ENCODE measurements at regions of chr7 and their contacts with region 1.

Region 1: GRCh38 chr7:26090927-26091519 is 61.0 kb upstream of the NFE2L3 start:
- DNase-seq: peak in 4 of 5 donors; percentile 40 to 45 (median 44)
- H3K4me3 ChIP-seq: no peak overlapping the region
- H3K4me3 Mint-ChIP-seq: peak overlapping the region in 2 of 8 donors; percentile 5 to 20
- H3K27ac ChIP-seq: no peak overlapping the region
- H3K27ac Mint-ChIP-seq: peak overlapping the region in 2 of 7 donors; percentile 0
- H3K4me1 ChIP-seq: no peaks in the 10 kb centered on the region
- H3K4me1 Mint-ChIP-seq: peaks cover 4 to 18% (median 12%) of the 10 kb centered on the region in 4 donors
- H3K27me3 ChIP-seq: no peaks in the 10 kb centered on the region
- H3K27me3 Mint-ChIP-seq: no peaks in the 10 kb centered on the region

Region 2: GRCh38 chr7:26101361-26102151 is 10.5 kb after region 1 on chr7:
- CTCF ChIA-PET with region 1: interaction called, 19 read pairs
- POLR2A ChIA-PET with region 1: no interaction called
- intact Hi-C with region 1: no loop called
- DNase-seq: no peak
- H3K4me3 ChIP-seq: no peak overlapping the region
- H3K4me3 Mint-ChIP-seq: peak overlapping the region in 7 of 8 donors; percentile 16 to 67 (median 46)
- H3K27ac ChIP-seq: no peak overlapping the region
- H3K27ac Mint-ChIP-seq: peak overlapping the region in 3 of 7 donors; percentile 28 to 57 (median 48)
- H3K4me1 ChIP-seq: peaks cover 38% of the 10 kb centered on the region
- H3K4me1 Mint-ChIP-seq: peaks cover 9 to 45% (median 27%) of the 10 kb centered on the region in 4 donors
- H3K27me3 ChIP-seq: no peaks in the 10 kb centered on the region
- H3K27me3 Mint-ChIP-seq: no peaks in the 10 kb centered on the region

Region 3: GRCh38 chr7:26151953-26152781 is 61.1 kb after region 1 on chr7 and contains the start of gene NFE2L3:
- CTCF ChIA-PET with region 1: interaction called, 19 read pairs
- POLR2A ChIA-PET with region 1: interaction called, 11 read pairs
- intact Hi-C with region 1: loop called (anchors 5 kb)
- DNase-seq: peak; percentile 80 to 84 (median 81)
- H3K4me3 ChIP-seq: peak within 1 kb of the TSS; percentile 89 to 93
- H3K4me3 Mint-ChIP-seq: peak within 1 kb of the TSS; percentile 91 to 99 (median 96)
- H3K27ac ChIP-seq: peak within 1 kb of the TSS; percentile 79
- H3K27ac Mint-ChIP-seq: peak within 1 kb of the TSS; percentile 94 to 98 (median 96)
- H3K4me1 ChIP-seq: peaks cover 52% of the 10 kb centered on the region
- H3K4me1 Mint-ChIP-seq: peaks cover 42 to 56% (median 49%) of the 10 kb centered on the region in 4 donors
- H3K27me3 ChIP-seq: no peaks in the 10 kb centered on the region
- H3K27me3 Mint-ChIP-seq: no peaks in the 10 kb centered on the region
- total RNA-seq, gene NFE2L3: 7.5 to 7.9 TPM

Region 4: DNA sequence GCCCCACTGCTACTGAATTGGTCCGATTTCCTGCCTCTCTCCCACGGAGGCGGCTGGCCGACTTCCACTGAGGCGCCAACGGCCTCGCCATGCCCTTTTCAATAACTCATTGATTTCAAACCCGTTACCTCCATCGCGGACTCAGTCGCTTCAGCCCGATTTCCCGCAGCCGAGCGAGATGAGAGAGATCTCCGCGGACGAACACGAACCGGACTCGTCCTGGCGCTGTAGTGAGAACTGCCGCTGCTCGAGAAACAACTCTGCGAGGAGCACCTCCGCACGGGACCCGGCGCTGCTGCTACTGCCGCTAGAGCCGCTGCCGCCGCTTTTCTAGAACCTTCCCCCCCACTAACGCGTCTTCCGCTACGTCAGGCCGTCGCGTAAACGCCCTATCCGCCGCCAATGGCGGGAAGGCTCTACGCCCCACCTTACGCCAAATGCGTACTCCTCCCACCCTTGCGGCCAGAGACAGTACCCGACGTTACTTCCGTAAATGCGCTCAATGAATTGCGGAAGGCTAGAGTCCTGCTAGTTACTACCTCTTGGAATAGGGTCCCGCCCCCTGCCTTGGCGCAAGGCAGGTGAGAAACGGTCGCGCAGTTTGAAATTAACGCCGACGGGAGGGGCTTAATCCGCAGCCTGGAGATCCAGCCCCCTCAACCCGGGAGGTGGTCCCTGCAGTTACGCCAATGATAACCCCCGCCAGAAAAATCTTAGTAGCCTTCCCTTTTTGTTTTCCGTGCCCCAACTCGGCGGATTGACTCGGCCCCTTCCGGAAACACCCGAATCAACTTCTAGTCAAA is 109.6 kb after region 1 on chr7 and contains the start of gene HNRNPA2B1:
- CTCF ChIA-PET with region 1: interaction called, 212 read pairs
- POLR2A ChIA-PET with region 1: interaction called, 69 read pairs
- intact Hi-C with region 1: loop called (anchors 1 kb)
- DNase-seq: peak; percentile 98 to 100 (median 99)
- H3K4me3 ChIP-seq: peak within 1 kb of the TSS; percentile 80 to 89
- H3K4me3 Mint-ChIP-seq: peak within 1 kb of the TSS; percentile 99 to 100 (median 100)
- H3K27ac ChIP-seq: peak within 1 kb of the TSS; percentile 98
- H3K27ac Mint-ChIP-seq: peak within 1 kb of the TSS; percentile 99 to 100 (median 100)
- H3K4me1 ChIP-seq: peaks cover 56% of the 10 kb centered on the region
- H3K4me1 Mint-ChIP-seq: peaks cover 38 to 76% (median 46%) of the 10 kb centered on the region in 4 donors
- H3K27me3 ChIP-seq: no peaks in the 10 kb centered on the region
- H3K27me3 Mint-ChIP-seq: peaks cover 0 to 4% of the 10 kb centered on the region in 2 donors
- total RNA-seq, gene HNRNPA2B1: 450 to 466 TPM

Region 5: DNA sequence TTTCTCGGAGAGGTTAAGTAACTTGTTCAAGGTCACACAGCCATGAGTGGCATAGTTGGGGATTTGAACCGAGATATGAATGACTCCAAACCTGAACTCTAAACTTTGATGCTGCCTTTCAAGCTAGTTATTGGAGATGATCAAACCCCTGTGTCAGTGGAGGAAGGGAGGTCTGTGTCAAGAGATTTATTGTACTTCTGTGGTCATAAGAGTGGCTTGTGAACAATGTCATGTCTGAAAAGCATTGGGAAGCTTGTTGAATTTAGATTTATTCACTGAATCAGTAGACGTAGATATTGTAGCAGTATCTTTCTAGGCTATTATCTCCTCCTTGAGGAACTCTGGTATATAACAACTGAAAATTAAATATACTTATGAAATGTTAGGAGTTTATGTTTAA is 227.9 kb after region 1 on chr7:
- CTCF ChIA-PET with region 1: interaction called, 11 read pairs
- POLR2A ChIA-PET with region 1: no interaction called
- intact Hi-C with region 1: no loop called
- DNase-seq: no peak
- H3K4me3 ChIP-seq: no peak overlapping the region
- H3K4me3 Mint-ChIP-seq: no peak overlapping the region
- H3K27ac ChIP-seq: no peak overlapping the region
- H3K27ac Mint-ChIP-seq: peak overlapping the region in 1 of 7 donors; percentile 5
- H3K4me1 ChIP-seq: no peaks in the 10 kb centered on the region
- H3K4me1 Mint-ChIP-seq: peaks cover 0 to 11% (median 3%) of the 10 kb centered on the region in 4 donors
- H3K27me3 ChIP-seq: no peaks in the 10 kb centered on the region
- H3K27me3 Mint-ChIP-seq: no peaks in the 10 kb centered on the region

Region 6: DNA sequence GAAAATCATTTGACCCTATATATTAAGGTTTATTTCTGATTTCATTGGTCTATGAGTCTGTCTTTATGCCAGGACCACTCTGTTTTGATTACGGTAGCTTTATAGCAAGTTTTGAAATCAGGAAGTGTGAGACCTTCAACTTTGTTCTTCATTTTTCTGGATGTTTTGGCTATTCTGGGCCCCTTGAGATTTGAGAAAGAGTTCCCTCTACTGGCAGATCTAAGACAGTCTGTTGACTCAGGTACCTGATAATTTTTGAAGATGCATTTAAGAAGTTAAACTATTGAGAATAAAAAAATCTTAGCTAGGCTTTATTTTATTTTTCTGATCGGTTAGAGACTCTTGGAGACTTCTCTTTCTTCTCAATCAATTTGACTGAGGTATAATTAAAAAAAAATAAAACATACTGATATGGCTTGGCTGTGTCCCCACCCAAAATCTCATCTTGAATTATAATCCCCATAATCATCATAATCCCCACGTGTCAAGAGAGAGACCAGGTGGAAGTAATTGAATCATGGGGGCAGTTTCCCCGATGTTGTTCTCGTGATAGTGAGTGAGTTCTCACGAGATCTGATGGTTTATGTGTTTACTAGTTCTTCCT is 409.8 kb after region 1 on chr7:
- CTCF ChIA-PET with region 1: no interaction called
- POLR2A ChIA-PET with region 1: no interaction called
- intact Hi-C with region 1: loop called (anchors 10 kb)
- DNase-seq: peak in 3 of 5 donors; percentile 3 to 9 (median 8)
- H3K4me3 ChIP-seq: no peak overlapping the region
- H3K4me3 Mint-ChIP-seq: no peak overlapping the region
- H3K27ac ChIP-seq: no peak overlapping the region
- H3K27ac Mint-ChIP-seq: no peak overlapping the region
- H3K4me1 ChIP-seq: no peaks in the 10 kb centered on the region
- H3K4me1 Mint-ChIP-seq: no peaks in the 10 kb centered on the region
- H3K27me3 ChIP-seq: no peaks in the 10 kb centered on the region
- H3K27me3 Mint-ChIP-seq: peaks cover 8 to 16% of the 10 kb centered on the region in 2 donors